WTC11 (cell line): ENCODE measurements at regions of chr17 and their contacts with region 1.

Region 1: GRCh38 chr17:34542700-34543336 is 36.6 kb upstream of the TMEM132E start:
- DNase-seq: peak; percentile 73
- ATAC-seq: peak; percentile 68
- H3K4me3 Mint-ChIP-seq: no peak overlapping the region
- H3K27ac Mint-ChIP-seq: no peak overlapping the region
- H3K4me1 Mint-ChIP-seq: peaks cover 5% of the 10 kb centered on the region
- H3K27me3 Mint-ChIP-seq: peaks cover 14% of the 10 kb centered on the region; the same call in 1 of the 2 replicates
- CTCF ChIP-seq: peak; percentile 98

Region 2: GRCh38 chr17:34519282-34519681 is 23.5 kb before region 1 on chr17:
- CTCF ChIA-PET with region 1: interaction called, 11 read pairs
- POLR2A ChIA-PET with region 1: no interaction called
- DNase-seq: peak; percentile 85
- ATAC-seq: peak; percentile 96
- H3K4me3 Mint-ChIP-seq: no peak overlapping the region
- H3K27ac Mint-ChIP-seq: no peak overlapping the region
- H3K4me1 Mint-ChIP-seq: peaks cover 5% of the 10 kb centered on the region; the same call in 1 of the 2 replicates
- H3K27me3 Mint-ChIP-seq: no peaks in the 10 kb centered on the region; the same call in 1 of the 2 replicates
- CTCF ChIP-seq: peak; percentile 66

Region 3: DNA sequence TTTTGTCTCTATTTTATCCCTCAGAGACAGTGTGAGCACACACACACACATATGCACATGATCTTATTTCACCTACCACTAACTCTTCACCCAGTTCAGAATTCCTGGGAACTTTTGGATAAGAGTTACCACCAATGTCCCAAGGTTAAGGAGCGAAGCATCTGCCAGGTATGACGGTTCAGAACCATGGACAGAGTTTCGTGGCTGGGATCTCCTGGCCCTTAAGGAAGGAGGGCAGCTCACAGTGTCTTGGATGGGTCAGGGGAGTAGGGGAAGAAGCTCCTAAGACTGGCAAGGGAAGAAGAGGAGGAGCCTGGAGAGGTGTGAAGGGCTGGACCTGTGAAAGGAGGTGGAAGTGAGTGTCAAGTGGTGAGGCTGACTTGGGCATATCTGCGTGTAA is 13.6 kb after region 1 on chr17:
- CTCF ChIA-PET with region 1: interaction called, 20 read pairs
- POLR2A ChIA-PET with region 1: interaction called, 3 read pairs
- DNase-seq: peak; percentile 70
- ATAC-seq: peak; percentile 87
- H3K4me3 Mint-ChIP-seq: no peak overlapping the region
- H3K27ac Mint-ChIP-seq: no peak overlapping the region
- H3K4me1 Mint-ChIP-seq: peaks cover 8% of the 10 kb centered on the region
- H3K27me3 Mint-ChIP-seq: peaks cover 4% of the 10 kb centered on the region
- CTCF ChIP-seq: no peak

Region 4: DNA sequence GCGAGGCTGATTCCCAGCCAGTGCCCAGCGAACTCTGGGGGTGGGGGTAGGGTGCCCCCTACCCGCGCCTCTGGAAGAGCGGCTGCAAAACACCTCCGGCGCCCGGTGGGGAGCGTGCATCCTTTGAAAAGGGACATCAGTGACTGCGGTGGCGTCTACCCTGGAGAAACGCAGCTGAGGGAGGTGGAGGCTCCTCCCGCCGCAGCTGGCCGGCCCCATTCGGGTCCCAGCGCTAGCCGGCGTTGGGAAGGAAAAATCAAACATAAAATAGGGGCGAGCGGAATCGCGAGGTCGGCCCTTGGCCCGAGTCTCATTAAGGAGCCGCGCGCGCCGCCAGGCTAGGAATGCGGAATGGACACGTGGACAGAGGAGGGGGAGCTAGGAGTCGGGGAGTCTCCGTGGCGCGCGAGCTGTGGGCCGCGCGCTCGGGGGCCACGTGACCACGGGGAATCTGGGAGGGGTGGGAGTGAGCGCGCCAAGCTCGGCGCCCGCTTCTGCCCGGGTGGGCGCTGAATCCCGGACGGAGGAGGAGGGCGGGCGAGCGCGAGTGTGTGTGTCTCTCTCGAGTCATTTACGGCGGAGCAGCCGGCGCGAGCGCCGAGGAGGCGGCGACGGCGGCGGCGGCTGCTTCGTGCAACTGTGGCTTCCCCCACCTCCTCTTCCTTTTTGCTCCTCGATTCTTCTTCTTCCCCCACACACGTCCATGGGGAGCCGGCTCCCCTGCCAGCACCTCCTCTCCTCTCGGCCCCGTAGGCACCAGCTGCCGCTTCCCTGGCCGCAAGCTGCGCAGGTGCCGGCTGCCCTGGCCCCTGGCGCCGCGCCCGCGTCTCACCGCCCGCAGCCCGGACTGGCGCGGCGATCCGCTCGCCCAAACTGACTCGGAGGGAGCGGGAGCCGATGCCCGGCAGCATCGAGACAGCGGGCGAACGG is 36.5 kb after region 1 on chr17 and contains the start of gene TMEM132E:
- CTCF ChIA-PET with region 1: interaction called, 51 read pairs
- POLR2A ChIA-PET with region 1: no interaction called
- DNase-seq: peak; percentile 68
- ATAC-seq: peak; percentile 7
- H3K4me3 Mint-ChIP-seq: peak within 1 kb of the TSS; percentile 84
- H3K27ac Mint-ChIP-seq: no peak within 1 kb of the TSS
- H3K4me1 Mint-ChIP-seq: peaks cover 36% of the 10 kb centered on the region
- H3K27me3 Mint-ChIP-seq: peaks cover 99% of the 10 kb centered on the region
- CTCF ChIP-seq: no peak
- total RNA-seq, gene TMEM132E: 1.2 to 2.3 TPM (median 2.0 TPM) in 3 replicates

Region 5: DNA sequence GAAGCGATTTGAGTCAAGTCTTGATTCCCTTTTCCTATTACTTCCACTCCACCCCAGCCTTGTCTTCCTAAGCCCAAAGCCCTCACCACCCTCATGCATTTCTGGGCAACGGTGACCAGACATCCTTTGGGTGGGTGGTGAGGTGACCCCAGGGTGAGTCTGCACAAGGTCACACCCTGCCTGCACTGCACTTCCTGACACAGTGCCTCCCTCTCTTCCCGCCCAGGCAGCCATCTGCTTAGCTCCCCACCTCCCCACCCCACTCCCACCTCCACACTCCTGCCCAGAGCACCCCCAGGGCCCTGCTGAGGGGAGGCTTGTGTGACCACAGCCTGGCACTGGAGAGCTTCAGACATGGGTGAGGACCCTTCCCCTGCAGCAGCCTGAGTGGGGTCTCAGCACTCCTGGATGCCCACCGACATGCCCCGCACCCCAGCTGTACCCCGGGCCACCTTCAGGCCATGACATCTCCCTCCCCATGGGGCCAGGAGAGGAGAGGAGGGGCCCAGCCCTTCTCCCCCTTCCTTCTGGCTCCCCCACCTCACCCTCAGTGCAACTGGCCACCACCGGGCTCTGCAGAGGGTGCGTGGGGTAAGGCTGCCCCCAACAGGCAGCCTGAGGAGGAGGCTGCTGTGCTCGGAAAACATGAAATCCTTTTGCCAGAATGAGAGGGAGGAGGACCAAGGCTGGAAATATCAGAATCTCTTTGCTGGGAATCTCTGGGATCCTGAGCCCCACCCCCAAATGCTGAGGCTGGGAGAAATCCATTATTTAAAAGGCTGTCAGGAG is 349.8 kb after region 1 on chr17:
- CTCF ChIA-PET with region 1: interaction called, 46 read pairs
- POLR2A ChIA-PET with region 1: no interaction called
- DNase-seq: peak; percentile 71
- ATAC-seq: peak; percentile 95
- H3K4me3 Mint-ChIP-seq: no peak overlapping the region
- H3K27ac Mint-ChIP-seq: no peak overlapping the region
- H3K4me1 Mint-ChIP-seq: peaks cover 3% of the 10 kb centered on the region; the same call in 1 of the 2 replicates
- H3K27me3 Mint-ChIP-seq: peaks cover 18% of the 10 kb centered on the region
- CTCF ChIP-seq: peak; percentile 74